ENCODE measurements at regions of chr5 and their contacts with region 1.

Region 1: GRCh38 chr5:76114179-76114851 is 31.1 kb downstream of the SV2C start:
- DNase-seq: peak; percentile 71
- H3K4me3 ChIP-seq: no peak overlapping the region
- H3K27ac ChIP-seq: no peak overlapping the region
- H3K4me1 ChIP-seq: peaks cover 2% of the 10 kb centered on the region
- H3K27me3 ChIP-seq: no peaks in the 10 kb centered on the region
- CTCF ChIP-seq: no peak
- POLR2A ChIP-seq: no peak

Region 2: GRCh38 chr5:76154009-76154690 is 39.8 kb after region 1 on chr5:
- CTCF ChIA-PET with region 1: no interaction called
- POLR2A ChIA-PET with region 1: no interaction called
- dilution Hi-C with region 1: no loop called
- intact Hi-C with region 1: loop called (anchors 1 kb)
- DNase-seq: no peak
- H3K4me3 ChIP-seq: no peak overlapping the region
- H3K27ac ChIP-seq: no peak overlapping the region
- H3K4me1 ChIP-seq: peaks cover 17% of the 10 kb centered on the region
- H3K27me3 ChIP-seq: peaks cover 5 to 6% of the 10 kb centered on the region in 2 experiments
- CTCF ChIP-seq: no peak
- POLR2A ChIP-seq: no peak

Region 3: DNA sequence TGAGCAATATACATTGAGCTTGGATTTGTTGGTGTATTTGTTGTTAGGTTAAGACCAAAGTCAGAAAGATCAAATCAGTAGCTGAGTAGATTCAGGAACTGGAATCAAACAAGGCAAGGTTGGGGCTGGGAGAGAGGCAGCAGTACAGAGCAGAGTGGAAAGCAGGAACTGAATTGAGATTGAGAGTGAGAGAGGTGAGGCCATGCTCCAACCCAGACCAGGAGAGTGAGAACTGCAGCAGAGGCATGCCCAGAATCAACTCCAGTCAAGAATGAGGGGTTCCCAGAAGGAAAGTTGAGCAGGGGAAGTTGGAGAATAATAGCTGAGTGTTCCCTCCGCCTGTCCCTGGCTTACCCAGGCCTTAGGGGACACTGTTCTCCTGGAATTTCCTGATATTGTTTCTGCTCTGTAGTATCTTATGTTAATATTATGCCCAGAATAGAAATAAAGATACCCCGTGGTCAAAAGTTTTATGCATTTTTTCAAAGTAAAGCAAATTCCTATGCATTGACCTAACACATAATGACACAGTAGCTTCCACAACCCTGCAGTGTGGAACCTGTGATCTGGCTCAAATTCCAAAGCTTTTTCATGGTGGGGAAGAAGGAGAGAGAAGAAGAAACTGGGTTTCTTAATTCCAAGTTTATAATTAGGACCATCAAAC is 51.5 kb after region 1 on chr5:
- CTCF ChIA-PET with region 1: no interaction called
- POLR2A ChIA-PET with region 1: no interaction called
- dilution Hi-C with region 1: no loop called
- intact Hi-C with region 1: loop called (anchors 5 kb)
- DNase-seq: no peak
- H3K4me3 ChIP-seq: no peak overlapping the region
- H3K27ac ChIP-seq: no peak overlapping the region
- H3K4me1 ChIP-seq: no peaks in the 10 kb centered on the region
- H3K27me3 ChIP-seq: peaks cover 1 to 2% of the 10 kb centered on the region in 2 experiments
- CTCF ChIP-seq: no peak
- POLR2A ChIP-seq: no peak

Region 4: GRCh38 chr5:76204719-76205118 is 90.4 kb after region 1 on chr5:
- CTCF ChIA-PET with region 1: no interaction called
- POLR2A ChIA-PET with region 1: no interaction called
- dilution Hi-C with region 1: no loop called
- intact Hi-C with region 1: no loop called
- DNase-seq: no peak
- H3K4me3 ChIP-seq: no peak overlapping the region
- H3K27ac ChIP-seq: no peak overlapping the region
- H3K4me1 ChIP-seq: no peaks in the 10 kb centered on the region
- H3K27me3 ChIP-seq: peaks cover 0 to 3% of the 10 kb centered on the region in 2 experiments
- CTCF ChIP-seq: no peak
- POLR2A ChIP-seq: no peak